ENCODE measurements at regions of chr10 and their contacts with region 1.

Region 1: DNA sequence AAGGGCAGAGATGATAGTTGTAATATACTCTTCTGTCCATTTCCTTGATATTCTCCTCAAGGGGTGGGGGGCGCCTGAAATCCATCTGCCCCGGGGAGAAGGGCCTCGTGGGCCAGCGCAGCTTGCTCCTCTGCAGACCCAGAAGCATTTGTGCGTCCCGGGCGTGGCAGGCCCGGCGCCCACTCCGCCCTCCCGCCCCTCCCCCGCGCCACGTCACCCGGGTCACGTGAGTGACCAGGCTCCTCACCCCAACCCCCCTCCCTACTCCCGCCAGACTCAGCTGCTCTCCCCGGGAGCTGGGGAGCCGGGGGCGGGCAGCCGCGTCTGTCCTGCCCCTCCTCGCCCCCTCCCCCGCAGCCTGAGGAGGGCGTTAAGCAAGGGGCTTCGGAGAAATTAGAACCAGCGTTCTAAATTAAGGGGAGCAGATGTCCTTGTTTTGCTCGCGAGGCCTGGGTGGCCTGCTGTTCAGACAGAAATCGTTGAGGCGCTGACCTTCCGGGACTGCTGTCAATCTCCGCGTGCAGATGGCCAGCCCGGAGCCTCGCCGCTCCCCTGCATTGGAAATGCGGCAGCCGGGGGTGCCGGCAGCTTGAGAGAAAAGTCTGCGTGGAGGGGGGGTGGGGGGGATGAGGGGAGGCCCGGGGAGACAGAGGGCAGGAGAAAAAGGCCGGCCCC is 102.1 kb upstream of the ZNF438 start:
- DNase-seq: peak; percentile 63
- H3K4me3 Mint-ChIP-seq: peak overlapping the region; percentile 54
- H3K27ac Mint-ChIP-seq: peak overlapping the region; percentile 86
- H3K4me1 Mint-ChIP-seq: no peaks in the 10 kb centered on the region
- H3K27me3 Mint-ChIP-seq: no peaks in the 10 kb centered on the region
- CTCF ChIP-seq: no peak

Region 2: GRCh38 chr10:31101123-31101522 is 32.6 kb before region 1 on chr10:
- CTCF ChIA-PET with region 1: interaction called, 6 read pairs
- intact Hi-C with region 1: loop called (anchors 1 kb)
- DNase-seq: peak; percentile 73
- H3K4me3 Mint-ChIP-seq: peak overlapping the region; percentile 41
- H3K27ac Mint-ChIP-seq: peak overlapping the region; percentile 100
- H3K4me1 Mint-ChIP-seq: peaks cover 26% of the 10 kb centered on the region
- H3K27me3 Mint-ChIP-seq: no peaks in the 10 kb centered on the region
- CTCF ChIP-seq: no peak